Activated naive CD4-positive, alpha-beta T cell treated with anti-CD3 and anti-CD28 coated beads, Interleukin-2, amount 10 ng/mL, durations not matched to agents 7 days and 5 days (primary cell): ENCODE measurements at regions of chr17 and their contacts with region 1.

Region 1: DNA sequence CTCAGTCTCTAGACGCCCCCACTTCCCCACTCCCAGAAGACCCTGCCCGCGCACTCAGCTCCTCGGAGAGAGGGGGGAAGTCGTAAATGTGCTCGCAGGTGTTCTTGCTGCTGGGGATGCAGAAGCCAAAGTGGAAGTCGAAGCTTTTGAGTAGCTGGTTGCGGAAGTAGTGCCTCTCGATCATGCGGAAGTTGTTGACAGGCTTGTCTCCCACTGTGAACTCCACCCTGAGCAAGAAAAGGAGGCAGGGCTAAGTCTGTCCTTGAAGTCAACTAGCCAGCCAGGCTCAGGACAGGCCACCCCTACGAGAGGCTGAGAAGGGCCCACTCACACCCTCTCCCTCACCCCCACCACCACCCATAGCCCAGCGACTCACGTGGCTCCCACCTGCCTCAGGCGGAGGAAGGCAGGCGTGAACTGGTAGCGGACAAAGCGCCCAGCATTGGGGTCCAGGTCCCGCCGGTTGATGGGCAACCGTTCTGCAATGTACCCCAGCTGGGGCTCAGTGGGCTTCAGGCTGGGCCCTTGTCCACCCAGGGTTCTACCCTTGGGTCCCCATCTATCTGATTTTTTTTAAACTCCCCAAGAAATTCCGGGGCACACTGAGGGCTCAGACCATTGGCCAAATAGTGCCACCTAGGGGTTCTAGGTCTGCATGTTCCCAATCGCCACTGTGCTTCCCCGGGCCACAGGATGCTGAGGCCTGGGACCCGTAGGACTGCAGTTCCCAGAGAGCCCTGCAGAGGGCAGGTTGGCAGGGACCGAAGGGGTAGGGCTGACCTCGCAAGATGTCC is 4.6 kb downstream of the UNC119 start:
- DNase-seq: peak; percentile 73
- H3K4me3 Mint-ChIP-seq: peak overlapping the region; percentile 65
- H3K27ac Mint-ChIP-seq: peak overlapping the region; percentile 91
- H3K4me1 Mint-ChIP-seq: peaks cover 48% of the 10 kb centered on the region
- H3K27me3 Mint-ChIP-seq: no peaks in the 10 kb centered on the region

Region 2: DNA sequence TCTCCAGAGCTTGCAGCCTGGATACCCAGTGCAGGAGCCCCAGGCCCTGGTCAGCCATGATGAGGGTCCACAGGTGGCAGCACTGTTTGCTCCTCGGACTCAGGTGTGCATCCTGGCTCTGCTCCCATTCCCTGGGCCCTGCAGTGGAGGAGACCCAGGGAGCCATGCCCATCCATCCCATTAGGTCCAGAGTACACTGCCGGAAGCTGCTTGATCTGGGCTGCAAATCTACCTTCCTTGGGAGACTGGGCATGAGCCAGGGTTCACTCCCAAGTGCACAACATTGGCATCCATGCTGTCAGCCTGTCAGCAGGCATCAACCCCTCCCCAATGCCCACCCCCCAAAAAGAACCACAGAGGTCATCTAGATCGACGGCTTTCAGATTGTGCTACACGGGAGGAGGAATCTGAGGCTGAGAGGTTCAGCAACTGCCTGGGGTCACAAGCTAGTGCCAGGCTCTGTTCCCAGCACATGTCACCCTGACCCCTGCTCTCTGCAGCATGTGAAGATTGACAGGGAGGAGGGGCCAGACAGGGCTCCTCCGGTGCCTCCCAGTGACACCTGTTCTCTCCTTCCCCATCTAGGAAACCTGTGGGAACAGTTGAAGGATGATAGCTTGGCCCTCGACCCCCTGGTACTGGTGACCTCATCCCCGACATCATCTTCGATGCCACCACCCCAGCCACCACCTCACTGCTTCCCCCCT is 11.1 kb before region 1 on chr17:
- CTCF ChIA-PET with region 1: interaction called, 12 read pairs
- DNase-seq: no peak
- H3K4me3 Mint-ChIP-seq: no peak overlapping the region
- H3K27ac Mint-ChIP-seq: no peak overlapping the region
- H3K4me1 Mint-ChIP-seq: no peaks in the 10 kb centered on the region
- H3K27me3 Mint-ChIP-seq: peaks cover 6% of the 10 kb centered on the region

Region 3: GRCh38 chr17:28571255-28572122 is 23.7 kb after region 1 on chr17 and contains the start of gene PIGS:
- CTCF ChIA-PET with region 1: interaction called, 24 read pairs
- DNase-seq: peak; percentile 97
- H3K4me3 Mint-ChIP-seq: peak within 1 kb of the TSS; percentile 97
- H3K27ac Mint-ChIP-seq: peak within 1 kb of the TSS; percentile 95
- H3K4me1 Mint-ChIP-seq: peaks cover 73% of the 10 kb centered on the region
- H3K27me3 Mint-ChIP-seq: no peaks in the 10 kb centered on the region

Region 4: GRCh38 chr17:28576758-28577465 is 29.1 kb after region 1 on chr17 and contains the start of gene ALDOC:
- CTCF ChIA-PET with region 1: interaction called, 24 read pairs
- DNase-seq: peak; percentile 99
- H3K4me3 Mint-ChIP-seq: peak within 1 kb of the TSS; percentile 85
- H3K27ac Mint-ChIP-seq: peak within 1 kb of the TSS; percentile 92
- H3K4me1 Mint-ChIP-seq: peaks cover 49% of the 10 kb centered on the region
- H3K27me3 Mint-ChIP-seq: no peaks in the 10 kb centered on the region

Region 5: GRCh38 chr17:28612936-28613872 is 65.4 kb after region 1 on chr17:
- CTCF ChIA-PET with region 1: interaction called, 29 read pairs
- DNase-seq: peak; percentile 47
- H3K4me3 Mint-ChIP-seq: no peak overlapping the region
- H3K27ac Mint-ChIP-seq: no peak overlapping the region
- H3K4me1 Mint-ChIP-seq: no peaks in the 10 kb centered on the region
- H3K27me3 Mint-ChIP-seq: no peaks in the 10 kb centered on the region